ENCODE measurements at regions of chr20 and their contacts with region 1.

Region 1: GRCh38 chr20:17710379-17711266 is 10.9 kb downstream of the BANF2 start:
- DNase-seq: no peak
- H3K4me3 ChIP-seq: no peak overlapping the region
- H3K27ac ChIP-seq: no peak overlapping the region
- H3K4me1 ChIP-seq: peaks cover 2 to 12% (median 7%) of the 10 kb centered on the region in 4 experiments
- H3K27me3 ChIP-seq: no peaks in the 10 kb centered on the region
- CTCF ChIP-seq: no peak
- EP300 ChIP-seq: no peak
- POLR2A ChIP-seq: no peak
- RAD21 ChIP-seq: no peak

Region 2: DNA sequence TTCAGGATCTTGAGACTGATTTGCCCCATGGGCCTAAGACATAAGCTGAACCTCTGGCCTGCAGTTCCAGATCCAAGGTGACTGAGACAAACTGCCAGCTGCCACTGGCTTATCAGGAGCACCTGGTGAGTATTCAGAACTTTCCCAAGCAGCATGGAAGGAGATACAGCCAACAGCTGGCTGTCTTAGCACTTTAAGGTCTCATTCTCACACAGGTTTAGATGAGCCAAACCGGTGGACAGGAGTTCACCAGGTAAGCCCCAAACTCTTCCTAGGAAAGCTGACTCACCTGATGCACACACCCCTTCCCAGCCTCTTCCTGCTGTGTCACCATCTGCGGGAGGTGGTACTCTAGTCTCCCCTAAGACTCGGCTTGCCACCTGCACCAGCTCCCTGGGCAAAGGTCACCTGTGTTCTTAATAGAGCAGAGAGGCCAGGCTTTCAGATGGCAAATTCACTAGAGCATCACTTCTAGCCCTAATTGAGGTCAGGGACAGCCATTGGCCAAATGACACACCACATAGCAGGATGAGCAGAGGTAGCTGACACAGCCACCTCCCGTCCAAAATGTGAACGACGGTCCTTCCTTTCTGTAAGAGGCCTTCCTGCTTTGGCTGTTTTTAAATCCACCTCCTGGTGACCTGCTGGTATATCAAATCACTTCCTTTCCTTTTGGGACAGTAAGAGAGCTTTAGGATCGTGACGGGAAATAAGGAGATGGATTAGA is 10.5 kb before region 1 on chr20 and contains the start of gene BANF2:
- CTCF ChIA-PET with region 1: interaction called, 14 read pairs
- POLR2A ChIA-PET with region 1: no interaction called
- DNase-seq: no peak
- H3K4me3 ChIP-seq: no peak within 1 kb of the TSS
- H3K27ac ChIP-seq: no peak within 1 kb of the TSS
- H3K4me1 ChIP-seq: no peaks in the 10 kb centered on the region
- H3K27me3 ChIP-seq: no peaks in the 10 kb centered on the region
- CTCF ChIP-seq: no peak
- EP300 ChIP-seq: no peak
- POLR2A ChIP-seq: no peak
- RAD21 ChIP-seq: no peak
- total RNA-seq, gene BANF2: not detected in 2 replicates

Region 3: GRCh38 chr20:17721802-17722486 is 11.3 kb after region 1 on chr20:
- CTCF ChIA-PET with region 1: interaction called, 13 read pairs
- POLR2A ChIA-PET with region 1: no interaction called
- DNase-seq: no peak
- H3K4me3 ChIP-seq: no peak overlapping the region
- H3K27ac ChIP-seq: no peak overlapping the region
- H3K4me1 ChIP-seq: no peaks in the 10 kb centered on the region
- H3K27me3 ChIP-seq: no peaks in the 10 kb centered on the region
- CTCF ChIP-seq: no peak
- EP300 ChIP-seq: no peak
- POLR2A ChIP-seq: no peak
- RAD21 ChIP-seq: no peak; a peak in 1 of 4 replicates

Measured in H1 (cell line).